ENCODE measurements at regions of chr13 and their contacts with region 1.

Region 1: GRCh38 chr13:74287724-74288169 is 153.5 kb upstream of the KLF12 start:
- DNase-seq: peak; percentile 47 to 97 (median 91)
- ATAC-seq: peak; percentile 65 to 74 (median 70)
- H3K4me3 ChIP-seq: peak overlapping the region in 1 of 2 donors; percentile 39
- H3K4me3 Mint-ChIP-seq: peak overlapping the region; percentile 68 to 86 (median 73)
- H3K27ac ChIP-seq: peak overlapping the region; percentile 86
- H3K27ac Mint-ChIP-seq: peak overlapping the region; percentile 86 to 98
- H3K4me1 ChIP-seq: peaks cover 29 to 37% of the 10 kb centered on the region in 2 experiments
- H3K4me1 Mint-ChIP-seq: peaks cover 59 to 76% (median 67%) of the 10 kb centered on the region in 3 donors
- H3K27me3 ChIP-seq: no peaks in the 10 kb centered on the region
- H3K27me3 Mint-ChIP-seq: no peaks in the 10 kb centered on the region

Region 2: DNA sequence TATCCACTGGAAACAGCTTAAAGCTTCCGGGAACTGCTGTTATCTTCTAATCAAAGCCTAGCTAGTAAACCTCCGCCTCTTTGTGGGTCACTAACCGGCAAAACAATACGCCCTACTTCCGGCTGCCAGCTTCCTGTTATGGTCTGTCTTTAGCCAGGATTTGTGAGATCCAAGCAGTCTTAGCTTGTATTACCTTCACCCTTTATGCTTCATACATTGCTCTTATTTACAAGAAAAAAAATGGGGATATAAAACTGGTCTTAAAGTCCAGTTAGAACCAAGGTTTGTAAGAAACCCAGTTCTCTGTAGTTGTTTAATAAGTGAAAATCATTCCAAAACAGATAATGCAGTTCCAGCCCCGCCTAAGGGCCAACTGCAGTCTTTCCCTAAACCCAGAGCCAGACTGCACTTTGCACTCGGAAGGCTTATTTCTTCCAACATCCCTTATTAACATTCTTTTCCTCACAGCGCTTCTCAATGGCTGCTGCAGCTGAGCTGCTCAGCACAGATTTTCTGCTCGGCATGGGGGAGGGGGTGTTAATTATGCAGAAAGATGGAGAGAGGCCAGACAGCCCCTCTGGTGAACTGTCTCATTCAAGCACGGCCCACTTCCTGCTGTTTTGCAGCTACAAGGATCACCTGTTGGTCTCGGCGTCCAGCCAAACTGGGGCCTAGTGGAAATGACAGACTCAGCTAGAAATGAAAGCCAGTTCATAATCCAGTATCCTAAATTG is 521.9 kb before region 1 on chr13:
- CTCF ChIA-PET with region 1: interaction called in 1 of 2 experiments, 16 read pairs
- POLR2A ChIA-PET with region 1: no interaction called
- DNase-seq: peak; percentile 65 to 93 (median 87)
- ATAC-seq: peak; percentile 88 to 92 (median 88)
- H3K4me3 ChIP-seq: peak overlapping the region; percentile 33 to 44
- H3K4me3 Mint-ChIP-seq: peak overlapping the region; percentile 77 to 82 (median 78)
- H3K27ac ChIP-seq: peak overlapping the region; percentile 87
- H3K27ac Mint-ChIP-seq: peak overlapping the region; percentile 96
- H3K4me1 ChIP-seq: peaks cover 38 to 56% of the 10 kb centered on the region in 2 experiments
- H3K4me1 Mint-ChIP-seq: peaks cover 85 to 86% (median 86%) of the 10 kb centered on the region in 3 donors
- H3K27me3 ChIP-seq: no peaks in the 10 kb centered on the region
- H3K27me3 Mint-ChIP-seq: no peaks in the 10 kb centered on the region

Region 3: GRCh38 chr13:73849292-73849691 is 438.5 kb before region 1 on chr13:
- CTCF ChIA-PET with region 1: interaction called, 5 to 28 read pairs
- POLR2A ChIA-PET with region 1: no interaction called
- DNase-seq: peak in 20 of 35 experiments; percentile 5 to 58 (median 16)
- ATAC-seq: peak in 2 of 4 experiments; percentile 46 to 60
- H3K4me3 ChIP-seq: no peak overlapping the region
- H3K4me3 Mint-ChIP-seq: no peak overlapping the region
- H3K27ac ChIP-seq: no peak overlapping the region
- H3K27ac Mint-ChIP-seq: peak overlapping the region; percentile 24 to 25
- H3K4me1 ChIP-seq: peaks cover 5 to 8% of the 10 kb centered on the region in 2 experiments
- H3K4me1 Mint-ChIP-seq: peaks cover 33 to 64% (median 57%) of the 10 kb centered on the region in 3 donors
- H3K27me3 ChIP-seq: no peaks in the 10 kb centered on the region
- H3K27me3 Mint-ChIP-seq: no peaks in the 10 kb centered on the region

Region 4: GRCh38 chr13:74090869-74091605 is 196.7 kb before region 1 on chr13:
- CTCF ChIA-PET with region 1: interaction called in 1 of 2 experiments, 14 read pairs
- POLR2A ChIA-PET with region 1: interaction called in 1 of 2 experiments, 3 read pairs
- DNase-seq: peak in 1 of 35 experiments; percentile 46
- ATAC-seq: peak in 2 of 4 experiments; percentile 52 to 65
- H3K4me3 ChIP-seq: no peak overlapping the region
- H3K4me3 Mint-ChIP-seq: peak overlapping the region; percentile 32 to 39 (median 38)
- H3K27ac ChIP-seq: peak overlapping the region; percentile 40
- H3K27ac Mint-ChIP-seq: peak overlapping the region; percentile 88 to 89
- H3K4me1 ChIP-seq: peaks cover 19 to 34% of the 10 kb centered on the region in 2 experiments
- H3K4me1 Mint-ChIP-seq: peaks cover 79 to 80% (median 80%) of the 10 kb centered on the region in 3 donors
- H3K27me3 ChIP-seq: no peaks in the 10 kb centered on the region
- H3K27me3 Mint-ChIP-seq: no peaks in the 10 kb centered on the region

Region 5: DNA sequence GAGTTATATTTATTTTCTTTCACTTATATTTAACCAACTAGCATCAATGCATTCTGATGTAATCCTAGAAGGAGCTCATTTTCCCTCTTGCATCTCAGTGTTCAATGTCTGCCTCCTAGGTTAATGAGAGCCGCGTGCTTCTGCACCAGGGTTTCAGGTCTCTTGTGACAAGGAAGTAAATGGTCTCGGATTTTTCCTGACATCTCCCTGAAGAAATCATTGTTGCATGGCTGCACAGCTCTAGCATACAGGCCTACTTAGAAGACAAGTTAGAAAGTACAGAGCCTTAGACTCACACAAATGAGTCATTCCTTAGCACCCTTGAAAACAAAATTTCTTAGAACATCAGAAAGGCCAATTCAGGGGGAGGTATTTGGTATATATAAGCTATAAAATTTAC is 96.3 kb before region 1 on chr13:
- CTCF ChIA-PET with region 1: interaction called in 1 of 2 experiments, 20 read pairs
- POLR2A ChIA-PET with region 1: interaction called in 1 of 2 experiments, 3 read pairs
- DNase-seq: no peak
- ATAC-seq: peak in 2 of 4 experiments; percentile 67 to 71
- H3K4me3 ChIP-seq: no peak overlapping the region
- H3K4me3 Mint-ChIP-seq: no peak overlapping the region
- H3K27ac ChIP-seq: no peak overlapping the region
- H3K27ac Mint-ChIP-seq: no peak overlapping the region
- H3K4me1 ChIP-seq: peaks cover 9 to 10% of the 10 kb centered on the region in 2 experiments
- H3K4me1 Mint-ChIP-seq: peaks cover 33 to 39% (median 36%) of the 10 kb centered on the region in 3 donors
- H3K27me3 ChIP-seq: no peaks in the 10 kb centered on the region
- H3K27me3 Mint-ChIP-seq: no peaks in the 10 kb centered on the region

Region 6: GRCh38 chr13:74243637-74244526 is 43.9 kb before region 1 on chr13:
- CTCF ChIA-PET with region 1: interaction called, 11 to 19 read pairs
- POLR2A ChIA-PET with region 1: interaction called in 1 of 2 experiments, 10 read pairs
- DNase-seq: peak in 1 of 35 experiments; percentile 67
- ATAC-seq: peak; percentile 79 to 88 (median 86)
- H3K4me3 ChIP-seq: peak overlapping the region in 1 of 2 donors; percentile 10
- H3K4me3 Mint-ChIP-seq: peak overlapping the region; percentile 44 to 75 (median 60)
- H3K27ac ChIP-seq: peak overlapping the region; percentile 91
- H3K27ac Mint-ChIP-seq: peak overlapping the region; percentile 94 to 96
- H3K4me1 ChIP-seq: peaks cover 33 to 51% of the 10 kb centered on the region in 2 experiments
- H3K4me1 Mint-ChIP-seq: peaks cover 71 to 73% (median 73%) of the 10 kb centered on the region in 3 donors
- H3K27me3 ChIP-seq: no peaks in the 10 kb centered on the region
- H3K27me3 Mint-ChIP-seq: no peaks in the 10 kb centered on the region

Region 7: DNA sequence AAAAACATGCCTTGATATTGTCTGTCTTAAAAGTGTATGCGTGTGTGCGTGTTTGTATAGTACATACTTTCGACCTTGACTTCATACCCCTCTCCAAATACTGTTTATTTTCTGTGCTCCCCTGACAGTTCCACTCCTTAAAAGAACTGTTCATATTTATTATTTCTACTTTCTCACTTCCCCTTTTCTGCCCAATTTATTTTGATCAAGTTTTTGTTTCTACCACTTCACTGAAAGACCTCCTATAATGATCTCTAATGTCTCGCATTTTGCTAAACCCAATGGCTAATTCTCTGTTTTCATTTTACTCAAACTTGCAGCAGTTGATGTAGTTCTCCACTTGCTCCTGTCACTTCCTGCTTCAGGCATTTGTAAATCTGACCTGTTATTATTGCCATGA is 272.6 kb after region 1 on chr13:
- CTCF ChIA-PET with region 1: no interaction called
- POLR2A ChIA-PET with region 1: no interaction called
- DNase-seq: no peak
- ATAC-seq: no peak
- H3K4me3 ChIP-seq: no peak overlapping the region
- H3K4me3 Mint-ChIP-seq: no peak overlapping the region
- H3K27ac ChIP-seq: no peak overlapping the region
- H3K27ac Mint-ChIP-seq: no peak overlapping the region
- H3K4me1 ChIP-seq: no peaks in the 10 kb centered on the region
- H3K4me1 Mint-ChIP-seq: peaks cover 0 to under 1% (median 0%) of the 10 kb centered on the region in 3 donors
- H3K27me3 ChIP-seq: no peaks in the 10 kb centered on the region
- H3K27me3 Mint-ChIP-seq: no peaks in the 10 kb centered on the region

Measured in T-cell (primary cell).